Mammary epithelial cell (primary cell): ENCODE measurements at regions of chr1 and their contacts with region 1.

Region 1: DNA sequence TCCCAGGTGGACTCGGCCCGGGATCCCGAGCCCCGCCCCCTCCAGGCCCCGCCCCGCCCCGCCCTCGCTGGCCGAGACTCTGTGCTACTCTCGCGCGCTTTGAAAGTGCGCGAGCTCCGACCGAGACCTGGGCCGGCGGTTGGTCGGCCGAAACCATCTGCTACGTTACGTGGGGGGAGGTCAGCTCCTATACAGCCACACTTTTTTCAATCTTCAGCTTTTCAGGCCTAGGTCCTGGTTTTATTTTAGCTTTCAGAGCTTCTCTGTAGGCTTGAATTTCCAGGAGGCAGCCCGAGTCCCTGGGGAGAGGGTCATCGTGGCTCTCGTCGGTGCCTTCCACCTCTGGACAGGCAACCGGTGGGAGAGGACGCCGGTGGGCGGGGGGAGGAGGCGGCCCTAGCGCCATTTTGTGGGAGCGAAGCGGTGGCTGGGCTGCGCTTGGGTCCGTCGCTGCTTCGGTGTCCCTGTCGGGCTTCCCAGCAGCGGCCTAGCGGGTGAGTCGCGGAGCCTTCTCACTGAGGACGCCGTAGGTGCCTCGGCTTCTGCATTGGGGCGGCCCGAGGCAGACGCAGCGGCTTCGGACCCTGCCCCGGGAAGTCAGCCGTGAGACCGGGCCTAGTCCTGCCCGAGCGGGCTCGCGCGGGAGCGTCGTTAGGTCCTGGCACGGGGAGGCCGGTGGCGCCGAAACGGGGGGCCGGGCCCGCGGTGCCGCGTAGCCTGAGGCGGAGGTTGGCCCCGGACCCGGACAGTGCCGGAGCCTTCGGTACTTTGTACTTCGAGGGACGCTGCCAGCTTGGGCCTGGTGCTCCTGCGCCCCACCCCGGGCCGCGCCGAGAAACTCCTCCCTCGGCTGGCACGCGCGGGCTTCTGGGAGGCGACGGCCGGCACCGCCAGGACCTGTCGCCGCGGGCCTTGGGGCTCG is at the start of gene TARDBP:
- DNase-seq: peak; percentile 90
- H3K4me3 ChIP-seq: peak within 1 kb of the TSS; percentile 79 to 97 (median 79)
- H3K27ac ChIP-seq: peak within 1 kb of the TSS; percentile 97
- H3K4me1 ChIP-seq: peaks cover 17% of the 10 kb centered on the region
- H3K27me3 ChIP-seq: no peaks in the 10 kb centered on the region
- CTCF ChIP-seq: no peak
- total RNA-seq, gene TARDBP: 32.2 to 122 TPM

Region 2: DNA sequence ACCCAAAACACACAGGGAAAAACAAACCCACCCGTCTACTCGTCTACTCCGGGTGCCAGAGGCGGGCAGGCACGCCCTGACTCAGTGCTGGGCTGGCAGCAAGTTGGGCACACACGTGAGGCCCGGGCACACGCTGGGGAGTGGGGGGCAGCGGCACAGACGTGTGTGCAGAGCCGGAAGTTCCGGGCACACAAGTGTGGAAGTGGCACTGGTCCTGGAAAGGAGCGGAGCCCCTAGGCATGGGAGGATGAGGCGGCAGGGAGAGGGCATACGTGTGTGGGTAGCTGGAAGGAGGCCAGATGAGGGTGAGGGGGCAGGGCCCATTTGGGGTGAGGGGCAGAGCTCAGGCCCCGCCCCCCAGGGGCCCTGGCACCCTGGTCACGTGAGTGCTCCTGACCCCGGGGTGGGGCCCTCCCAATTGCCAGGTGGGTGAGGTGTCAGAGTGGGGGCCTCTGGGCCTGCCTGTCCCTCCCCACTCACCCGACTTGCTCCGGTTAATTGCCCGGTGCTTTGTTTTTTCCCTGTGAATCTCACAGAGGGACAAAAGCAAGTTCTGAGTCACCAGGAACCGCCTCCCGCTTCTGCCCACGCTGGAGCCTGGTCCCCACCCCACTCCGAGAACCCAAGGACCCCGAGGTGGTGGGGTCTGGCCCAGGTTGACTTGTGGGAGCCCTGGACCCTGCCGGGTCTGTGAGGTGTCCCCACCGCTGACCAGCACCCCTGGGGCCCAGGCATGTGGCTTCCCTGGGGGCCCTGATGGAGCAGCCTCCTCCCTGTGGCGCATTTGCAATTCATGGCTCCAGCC is 111.2 kb before region 1 on chr1:
- CTCF ChIA-PET with region 1: no interaction called
- dilution Hi-C with region 1: loop called (anchors 5 kb)
- in situ Hi-C with region 1: no loop called
- intact Hi-C with region 1: loop called (anchors 1 kb)
- DNase-seq: peak; percentile 64
- H3K4me3 ChIP-seq: peak overlapping the region in 2 of 3 experiments; percentile 30 to 35
- H3K27ac ChIP-seq: peak overlapping the region; percentile 82
- H3K4me1 ChIP-seq: peaks cover 46% of the 10 kb centered on the region
- H3K27me3 ChIP-seq: no peaks in the 10 kb centered on the region
- CTCF ChIP-seq: no peak

Region 3: GRCh38 chr1:10965546-10966226 is 46.8 kb before region 1 on chr1:
- CTCF ChIA-PET with region 1: no interaction called
- dilution Hi-C with region 1: loop called (anchors 5 kb)
- in situ Hi-C with region 1: no loop called
- intact Hi-C with region 1: no loop called
- DNase-seq: peak; percentile 24
- H3K4me3 ChIP-seq: no peak overlapping the region
- H3K27ac ChIP-seq: no peak overlapping the region
- H3K4me1 ChIP-seq: peaks cover 7% of the 10 kb centered on the region
- H3K27me3 ChIP-seq: no peaks in the 10 kb centered on the region
- CTCF ChIP-seq: no peak

Region 4: DNA sequence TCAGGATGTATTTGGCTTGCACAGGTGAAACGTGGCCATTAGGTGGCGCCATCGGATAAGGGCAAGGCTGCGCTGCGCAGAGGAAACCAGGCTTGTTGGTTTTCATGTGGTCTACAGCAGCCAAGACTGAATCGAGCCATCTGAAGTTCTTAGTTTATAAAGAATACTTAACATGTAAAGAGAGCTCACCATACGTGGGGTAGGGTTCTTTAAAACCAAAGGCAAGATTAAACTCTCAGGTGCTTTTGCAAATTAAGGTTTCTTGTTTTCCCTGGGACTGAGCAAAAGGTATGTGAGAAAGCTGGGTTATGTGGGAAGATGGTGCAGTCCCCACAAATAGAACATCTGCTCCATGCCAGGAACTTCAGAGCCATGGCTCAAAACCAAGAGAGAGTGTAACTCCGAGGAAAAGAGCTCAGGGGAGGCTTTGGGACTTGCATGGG is 25.2 kb after region 1 on chr1:
- CTCF ChIA-PET with region 1: no interaction called
- dilution Hi-C with region 1: no loop called
- in situ Hi-C with region 1: no loop called
- intact Hi-C with region 1: no loop called
- DNase-seq: peak; percentile 68
- H3K4me3 ChIP-seq: no peak overlapping the region
- H3K27ac ChIP-seq: no peak overlapping the region
- H3K4me1 ChIP-seq: no peaks in the 10 kb centered on the region
- H3K27me3 ChIP-seq: no peaks in the 10 kb centered on the region
- CTCF ChIP-seq: peak; percentile 98 to 99